ENCODE measurements at regions of chr3 and their contacts with region 1.

Region 1: GRCh38 chr3:168047190-168047795 is 48.4 kb downstream of the GOLIM4 start:
- DNase-seq: peak; percentile 50
- H3K4me3 ChIP-seq: no peak overlapping the region; a peak in 1 of 4 replicates
- H3K27ac ChIP-seq: peak overlapping the region in 1 of 2 experiments; percentile 12; a peak in 3 of 4 replicates
- H3K4me1 ChIP-seq: peaks cover under 1 to 23% of the 10 kb centered on the region in 2 experiments
- H3K27me3 ChIP-seq: no peaks in the 10 kb centered on the region
- CTCF ChIP-seq: peak; percentile 96
- EP300 ChIP-seq: no peak
- RAD21 ChIP-seq: peak; percentile 99

Region 2: DNA sequence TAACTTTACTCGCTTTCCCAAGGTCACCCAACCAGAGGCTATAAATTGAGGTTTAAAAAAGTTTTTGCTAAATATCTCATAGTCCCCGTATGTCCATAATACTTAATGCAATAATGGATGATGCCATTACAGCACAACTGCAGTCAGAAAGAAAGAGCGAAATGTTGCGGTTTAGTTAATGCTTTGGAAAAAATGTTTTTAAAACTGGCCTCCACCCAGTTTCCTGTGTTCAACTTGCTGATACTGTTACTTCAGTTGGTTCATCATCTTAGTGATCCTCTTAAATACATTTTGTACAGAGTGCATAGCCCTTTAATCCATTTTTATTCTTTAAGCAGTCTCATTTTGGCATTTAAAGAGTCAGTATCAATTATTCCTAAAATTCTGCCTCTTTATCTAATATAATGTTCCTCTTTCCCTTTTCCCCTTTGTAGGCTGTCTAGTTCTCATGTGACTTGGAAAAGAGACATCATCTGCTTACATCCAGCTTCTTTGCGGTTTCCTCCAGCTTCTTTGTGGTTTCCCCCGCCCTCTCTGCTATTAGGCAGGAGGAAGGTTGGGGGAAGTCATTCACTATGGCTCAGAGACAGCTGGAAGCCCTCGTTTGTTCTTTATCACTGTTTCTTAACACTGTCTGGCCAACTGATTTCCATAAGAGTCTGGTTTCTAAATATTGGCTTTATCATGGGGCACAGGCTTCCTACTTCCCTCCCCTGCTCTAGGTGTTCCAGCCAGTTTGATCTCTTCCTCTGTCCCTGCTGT is 105.9 kb before region 1 on chr3:
- CTCF ChIA-PET with region 1: no interaction called
- POLR2A ChIA-PET with region 1: no interaction called
- DNase-seq: no peak
- H3K4me3 ChIP-seq: no peak overlapping the region
- H3K27ac ChIP-seq: no peak overlapping the region
- H3K4me1 ChIP-seq: no peaks in the 10 kb centered on the region
- H3K27me3 ChIP-seq: no peaks in the 10 kb centered on the region
- CTCF ChIP-seq: no peak
- EP300 ChIP-seq: 0 out of 4 replicates have a peak, but pooled peaks of 1 of the 2 experiments have one; percentile 35
- RAD21 ChIP-seq: no peak

Region 3: DNA sequence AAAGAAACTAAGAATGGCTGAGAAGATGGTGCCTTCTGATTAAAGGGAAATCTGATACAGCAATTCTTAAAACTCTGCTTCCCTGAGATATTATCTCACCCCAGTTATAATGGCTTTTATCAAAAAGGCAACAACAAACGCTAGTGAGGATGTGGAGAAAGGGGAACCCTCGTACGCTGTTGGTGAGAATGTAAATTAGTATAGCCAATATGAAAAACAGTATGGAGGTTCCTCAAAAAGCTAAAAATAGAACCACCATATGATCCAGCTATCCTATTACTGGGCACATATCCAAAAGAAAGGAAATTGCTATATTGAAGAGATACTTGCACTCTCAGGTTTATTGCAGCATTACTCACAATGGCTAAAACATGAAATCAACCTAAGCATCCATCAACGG is 16.7 kb before region 1 on chr3:
- CTCF ChIA-PET with region 1: interaction called, 12 read pairs
- POLR2A ChIA-PET with region 1: no interaction called
- DNase-seq: no peak
- H3K4me3 ChIP-seq: no peak overlapping the region
- H3K27ac ChIP-seq: peak overlapping the region in 1 of 2 experiments; percentile 2; a peak in 1 of 4 replicates
- H3K4me1 ChIP-seq: peaks cover 0 to 15% of the 10 kb centered on the region in 2 experiments; a peak in 2 of 4 replicates
- H3K27me3 ChIP-seq: no peaks in the 10 kb centered on the region
- CTCF ChIP-seq: no peak
- EP300 ChIP-seq: peak in 1 of 2 experiments; percentile 52; a peak in 1 of 4 replicates
- RAD21 ChIP-seq: no peak

Region 4: DNA sequence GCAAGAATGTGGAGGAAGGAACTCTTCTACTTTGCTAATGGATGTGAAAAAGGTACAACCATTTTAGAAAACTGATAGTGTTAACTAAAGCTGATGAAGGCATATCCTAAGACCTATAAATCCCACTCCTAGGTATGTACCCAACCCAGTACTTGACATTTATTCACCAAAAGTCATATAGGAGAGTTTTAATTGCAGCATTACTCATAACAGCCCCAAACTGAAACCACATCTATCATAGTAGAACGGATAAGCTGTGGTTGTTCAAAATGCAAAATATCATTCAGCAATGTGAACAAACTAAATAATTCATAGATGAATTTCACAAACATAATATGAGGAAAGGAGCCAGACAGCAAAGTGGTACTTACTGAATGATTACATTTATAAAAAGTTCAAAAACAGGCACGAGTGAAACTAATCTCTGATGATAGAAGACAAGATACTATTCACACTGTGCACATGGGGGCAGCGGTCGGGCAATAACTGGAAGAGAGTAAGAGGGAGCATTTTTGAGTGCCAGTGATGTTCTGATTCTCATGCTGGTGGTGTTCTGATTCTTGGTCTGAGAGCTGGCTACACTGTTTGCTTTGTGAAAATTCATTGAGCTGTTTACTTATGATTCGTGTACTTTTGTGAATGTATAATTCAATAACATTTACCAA is 14.2 kb after region 1 on chr3:
- CTCF ChIA-PET with region 1: interaction called, 29 read pairs
- POLR2A ChIA-PET with region 1: no interaction called
- DNase-seq: no peak
- H3K4me3 ChIP-seq: no peak overlapping the region
- H3K27ac ChIP-seq: no peak overlapping the region; a peak in 1 of 4 replicates
- H3K4me1 ChIP-seq: peaks cover 6 to 20% of the 10 kb centered on the region in 2 experiments; a peak in 2 of 4 replicates
- H3K27me3 ChIP-seq: no peaks in the 10 kb centered on the region
- CTCF ChIP-seq: peak; percentile 40
- EP300 ChIP-seq: no peak
- RAD21 ChIP-seq: peak; percentile 53

Region 5: DNA sequence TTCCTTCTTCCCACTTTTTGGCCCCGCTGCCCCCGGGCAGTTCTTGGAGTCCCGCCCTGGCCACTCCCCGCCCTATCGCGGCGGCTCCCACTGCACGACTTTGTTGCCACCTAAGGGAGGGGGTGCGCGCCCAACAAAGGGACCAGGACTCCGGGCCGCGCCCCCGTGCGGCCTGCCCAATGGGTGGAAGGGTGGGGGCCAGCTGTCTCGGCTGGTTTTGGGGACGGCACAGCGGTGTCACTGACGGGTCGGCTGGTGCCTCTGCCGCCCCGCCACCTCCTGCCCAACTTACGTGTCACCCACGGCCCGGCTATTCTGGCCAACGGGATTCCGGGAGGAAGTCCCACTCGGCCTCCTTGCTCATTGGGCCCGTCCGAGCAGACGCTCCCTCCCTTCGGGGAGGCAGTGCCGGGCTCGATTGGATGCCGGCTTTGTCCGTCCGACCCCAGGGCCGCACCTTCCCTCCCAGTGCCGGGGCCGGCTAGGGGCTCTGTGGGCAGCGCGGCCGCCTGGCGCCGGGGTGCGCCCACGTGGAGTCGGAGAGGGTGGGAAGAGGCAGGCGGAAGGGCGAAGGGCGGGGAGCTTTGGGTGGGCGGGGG is 48.4 kb after region 1 on chr3 and contains the start of gene GOLIM4:
- CTCF ChIA-PET with region 1: interaction called, 32 read pairs
- POLR2A ChIA-PET with region 1: no interaction called
- DNase-seq: peak; percentile 95
- H3K4me3 ChIP-seq: peak within 1 kb of the TSS; percentile 88 to 91
- H3K27ac ChIP-seq: peak within 1 kb of the TSS; percentile 88 to 97
- H3K4me1 ChIP-seq: peaks cover 14 to 22% of the 10 kb centered on the region in 2 experiments; a peak in 3 of 4 replicates
- H3K27me3 ChIP-seq: no peaks in the 10 kb centered on the region
- CTCF ChIP-seq: peak; percentile 20; the same call in 1 of the 2 replicates
- EP300 ChIP-seq: no peak; a peak in 1 of 4 replicates
- RAD21 ChIP-seq: 0 out of 2 replicates have a peak, but pooled peaks have one; percentile 1
- polyA plus RNA-seq, gene GOLIM4: 38.3 and 42.3 TPM in 2 replicates

Region 6: GRCh38 chr3:168156479-168156878 is 109.2 kb after region 1 on chr3:
- CTCF ChIA-PET with region 1: interaction called, 24 read pairs
- POLR2A ChIA-PET with region 1: no interaction called
- DNase-seq: no peak
- H3K4me3 ChIP-seq: no peak overlapping the region
- H3K27ac ChIP-seq: no peak overlapping the region
- H3K4me1 ChIP-seq: no peaks in the 10 kb centered on the region; a peak in 1 of 4 replicates
- H3K27me3 ChIP-seq: no peaks in the 10 kb centered on the region
- CTCF ChIP-seq: no peak
- EP300 ChIP-seq: no peak
- RAD21 ChIP-seq: no peak

Region 7: DNA sequence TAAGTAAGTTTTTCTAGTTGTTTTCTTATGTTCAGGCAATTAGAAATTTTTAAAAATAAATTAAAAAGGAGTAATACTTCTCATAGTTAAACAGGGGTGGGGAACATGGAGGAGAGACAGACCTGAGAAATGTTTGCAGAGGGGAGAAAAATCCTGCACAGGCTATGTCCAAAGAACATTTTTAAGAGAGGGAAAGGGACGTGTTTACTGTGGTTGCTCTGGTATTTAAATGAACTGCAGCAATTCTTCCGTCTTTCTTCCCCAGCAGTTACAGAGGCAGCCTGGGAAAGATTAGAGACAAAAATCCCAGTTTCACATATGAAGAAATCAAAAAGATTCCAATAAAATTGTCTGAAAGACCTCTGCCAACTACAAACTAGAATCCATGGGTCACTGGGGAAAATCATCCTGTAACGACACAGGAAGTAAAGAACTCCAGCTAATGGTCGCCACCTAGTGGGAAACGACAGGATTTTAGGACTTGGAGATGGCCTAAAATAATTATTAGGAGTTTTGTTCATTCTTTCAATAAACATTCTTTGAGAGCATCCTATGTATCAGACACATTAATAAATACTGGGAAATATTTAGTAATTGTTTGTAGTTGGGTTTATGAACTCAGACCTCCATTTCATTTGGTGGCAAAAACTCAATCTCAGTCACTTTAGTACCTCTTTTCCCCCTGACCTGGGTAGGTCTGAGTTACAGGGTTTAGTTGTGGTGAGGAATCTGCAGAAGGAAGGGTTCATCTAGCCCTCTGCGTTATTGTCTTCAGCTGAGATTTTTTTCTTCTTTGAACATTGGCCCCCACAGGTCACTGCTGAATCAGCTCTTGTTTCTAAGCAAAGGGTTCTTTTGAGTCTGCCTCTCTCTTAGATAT is 118.3 kb after region 1 on chr3:
- CTCF ChIA-PET with region 1: interaction called, 78 read pairs
- POLR2A ChIA-PET with region 1: no interaction called
- DNase-seq: peak; percentile 64
- H3K4me3 ChIP-seq: no peak overlapping the region; a peak in 1 of 4 replicates
- H3K27ac ChIP-seq: no peak overlapping the region
- H3K4me1 ChIP-seq: no peaks in the 10 kb centered on the region
- H3K27me3 ChIP-seq: no peaks in the 10 kb centered on the region
- CTCF ChIP-seq: peak; percentile 87
- EP300 ChIP-seq: no peak
- RAD21 ChIP-seq: peak; percentile 96

Region 8: GRCh38 chr3:168183774-168184173 is 136.5 kb after region 1 on chr3:
- CTCF ChIA-PET with region 1: interaction called, 10 read pairs
- POLR2A ChIA-PET with region 1: no interaction called
- DNase-seq: no peak
- H3K4me3 ChIP-seq: no peak overlapping the region
- H3K27ac ChIP-seq: no peak overlapping the region
- H3K4me1 ChIP-seq: no peaks in the 10 kb centered on the region
- H3K27me3 ChIP-seq: no peaks in the 10 kb centered on the region
- CTCF ChIP-seq: no peak
- EP300 ChIP-seq: no peak
- RAD21 ChIP-seq: no peak